ENCODE measurements at regions of chr16 and their contacts with region 1.

Region 1: GRCh38 chr16:27235055-27235937 is 32.0 kb downstream of the KDM8 start:
- DNase-seq: peak; percentile 97
- H3K4me3 Mint-ChIP-seq: peak overlapping the region; percentile 65
- H3K27ac Mint-ChIP-seq: peak overlapping the region; percentile 100
- H3K4me1 Mint-ChIP-seq: peaks cover 90% of the 10 kb centered on the region
- H3K27me3 Mint-ChIP-seq: no peaks in the 10 kb centered on the region

Region 2: DNA sequence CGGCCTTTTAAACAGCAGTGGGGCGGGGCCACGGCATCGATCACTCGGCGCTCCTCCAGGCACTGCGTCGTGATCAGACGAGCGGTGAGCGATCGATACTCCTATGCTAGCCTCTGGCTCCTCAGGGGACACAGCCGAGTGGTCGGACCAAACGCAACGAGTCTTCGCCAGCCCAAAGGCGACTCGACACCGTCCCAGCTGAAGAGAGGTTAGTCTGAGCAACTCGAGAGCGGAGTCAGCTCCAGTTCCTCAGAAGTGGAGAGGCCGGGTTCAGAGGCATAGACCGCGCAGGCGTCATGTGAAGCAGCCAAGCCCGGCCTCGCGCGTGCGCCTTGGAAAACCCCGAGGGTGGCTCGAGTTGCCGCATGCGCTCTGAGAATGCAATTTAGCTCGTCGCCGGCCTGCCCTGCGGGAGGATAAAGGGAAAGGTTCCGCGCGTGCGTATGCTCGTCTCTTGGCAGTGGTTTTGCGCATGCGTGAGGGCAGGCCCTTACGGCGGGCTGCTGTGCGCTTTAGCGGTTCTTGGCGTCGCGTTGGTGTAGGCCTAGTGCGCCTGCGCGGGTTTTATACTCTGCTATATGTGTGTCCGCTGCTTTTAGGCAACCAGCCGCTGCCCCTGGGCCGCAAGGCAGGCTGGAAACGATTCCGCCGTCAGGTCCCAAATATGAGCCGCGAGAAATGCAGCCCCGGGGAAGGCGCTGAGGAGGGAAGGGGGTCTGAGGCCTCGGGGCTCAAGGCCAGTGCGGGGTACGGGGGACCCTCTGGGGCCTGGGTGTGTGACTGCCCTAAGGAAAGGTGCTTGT is 31.7 kb before region 1 on chr16 and contains the start of gene KDM8:
- intact Hi-C with region 1: loop called (anchors 1 kb)
- DNase-seq: peak; percentile 100
- H3K4me3 Mint-ChIP-seq: peak within 1 kb of the TSS; percentile 93
- H3K27ac Mint-ChIP-seq: peak within 1 kb of the TSS; percentile 100
- H3K4me1 Mint-ChIP-seq: peaks cover 52% of the 10 kb centered on the region
- H3K27me3 Mint-ChIP-seq: peaks cover 2% of the 10 kb centered on the region
- total RNA-seq, gene KDM8: 11.0 and 13.6 TPM in 2 replicates

Region 3: GRCh38 chr16:27268376-27269299 is 33.3 kb after region 1 on chr16 and contains the start of gene NSMCE1:
- intact Hi-C with region 1: loop called (anchors 1 kb)
- DNase-seq: peak; percentile 99
- H3K4me3 Mint-ChIP-seq: peak within 1 kb of the TSS; percentile 98
- H3K27ac Mint-ChIP-seq: peak within 1 kb of the TSS; percentile 98
- H3K4me1 Mint-ChIP-seq: peaks cover 70% of the 10 kb centered on the region
- H3K27me3 Mint-ChIP-seq: no peaks in the 10 kb centered on the region
- total RNA-seq, gene NSMCE1: 143 and 149 TPM in 2 replicates

Region 4: DNA sequence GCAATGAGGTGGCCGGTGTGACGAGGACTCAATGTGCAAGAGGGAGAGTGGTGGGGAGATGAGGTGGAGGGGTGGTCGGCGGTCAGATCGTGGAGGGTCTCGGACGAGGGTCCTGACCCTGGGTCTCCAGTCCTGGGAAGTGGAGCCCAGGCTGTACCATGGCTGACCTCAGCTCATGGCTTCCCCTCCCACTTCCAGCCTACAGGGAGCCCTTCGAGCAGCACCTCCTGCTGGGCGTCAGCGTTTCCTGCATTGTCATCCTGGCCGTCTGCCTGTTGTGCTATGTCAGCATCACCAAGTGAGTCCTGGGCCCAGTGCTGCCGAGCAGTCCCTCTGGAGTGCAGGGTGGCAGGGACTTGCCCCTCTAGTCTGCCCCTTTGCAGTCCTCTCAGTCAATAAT is 120.3 kb after region 1 on chr16:
- intact Hi-C with region 1: loop called (anchors 1 kb)
- DNase-seq: peak; percentile 79
- H3K4me3 Mint-ChIP-seq: no peak overlapping the region
- H3K27ac Mint-ChIP-seq: peak overlapping the region; percentile 26
- H3K4me1 Mint-ChIP-seq: peaks cover 19% of the 10 kb centered on the region
- H3K27me3 Mint-ChIP-seq: no peaks in the 10 kb centered on the region

Region 5: GRCh38 chr16:27408012-27408601 is 172.8 kb after region 1 on chr16:
- intact Hi-C with region 1: loop called (anchors 1 kb)
- DNase-seq: peak; percentile 79
- H3K4me3 Mint-ChIP-seq: peak overlapping the region; percentile 100
- H3K27ac Mint-ChIP-seq: peak overlapping the region; percentile 98
- H3K4me1 Mint-ChIP-seq: peaks cover 62% of the 10 kb centered on the region
- H3K27me3 Mint-ChIP-seq: no peaks in the 10 kb centered on the region